ENCODE measurements at regions of chr10 and their contacts with region 1.

Region 1: GRCh38 chr10:10665750-10666149 is 351.9 kb upstream of the CELF2 start:
- DNase-seq: no peak
- CTCF ChIP-seq: no peak

Region 2: DNA sequence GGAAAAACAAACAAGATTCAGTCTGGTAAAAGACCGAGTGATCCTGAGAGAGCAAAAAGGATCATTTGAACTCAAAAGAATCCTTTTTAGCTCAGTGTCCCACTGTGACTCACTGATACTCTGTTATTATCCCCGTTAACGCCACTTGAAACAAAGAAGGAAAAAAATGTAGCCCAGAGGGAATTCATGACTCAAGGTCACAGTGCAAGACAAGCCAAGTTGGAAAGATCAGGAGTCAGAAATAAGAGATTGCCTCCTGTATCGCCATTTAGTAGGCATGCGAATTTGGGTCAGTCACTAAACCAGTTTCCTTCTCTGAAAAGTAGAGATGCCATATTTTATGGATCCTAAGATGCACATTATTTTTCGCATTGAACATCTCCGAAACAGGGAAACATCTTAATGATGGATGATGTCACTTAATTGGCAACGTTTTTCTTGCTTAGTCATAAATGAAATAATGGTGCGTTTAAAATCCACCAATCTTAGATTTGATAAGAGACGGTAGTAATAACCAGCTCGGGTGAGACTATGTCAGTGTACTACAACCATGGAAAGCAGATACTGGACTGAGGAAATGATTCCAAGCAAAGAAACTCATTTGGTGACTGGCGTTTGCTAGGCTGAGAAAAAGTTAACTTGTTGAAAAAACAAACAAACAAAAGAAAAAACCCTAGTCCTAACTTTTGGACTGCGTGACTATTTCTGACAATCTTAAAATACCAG is 150.1 kb before region 1 on chr10:
- CTCF ChIA-PET with region 1: no interaction called
- POLR2A ChIA-PET with region 1: no interaction called
- DNase-seq: no peak
- CTCF ChIP-seq: no peak

Region 3: DNA sequence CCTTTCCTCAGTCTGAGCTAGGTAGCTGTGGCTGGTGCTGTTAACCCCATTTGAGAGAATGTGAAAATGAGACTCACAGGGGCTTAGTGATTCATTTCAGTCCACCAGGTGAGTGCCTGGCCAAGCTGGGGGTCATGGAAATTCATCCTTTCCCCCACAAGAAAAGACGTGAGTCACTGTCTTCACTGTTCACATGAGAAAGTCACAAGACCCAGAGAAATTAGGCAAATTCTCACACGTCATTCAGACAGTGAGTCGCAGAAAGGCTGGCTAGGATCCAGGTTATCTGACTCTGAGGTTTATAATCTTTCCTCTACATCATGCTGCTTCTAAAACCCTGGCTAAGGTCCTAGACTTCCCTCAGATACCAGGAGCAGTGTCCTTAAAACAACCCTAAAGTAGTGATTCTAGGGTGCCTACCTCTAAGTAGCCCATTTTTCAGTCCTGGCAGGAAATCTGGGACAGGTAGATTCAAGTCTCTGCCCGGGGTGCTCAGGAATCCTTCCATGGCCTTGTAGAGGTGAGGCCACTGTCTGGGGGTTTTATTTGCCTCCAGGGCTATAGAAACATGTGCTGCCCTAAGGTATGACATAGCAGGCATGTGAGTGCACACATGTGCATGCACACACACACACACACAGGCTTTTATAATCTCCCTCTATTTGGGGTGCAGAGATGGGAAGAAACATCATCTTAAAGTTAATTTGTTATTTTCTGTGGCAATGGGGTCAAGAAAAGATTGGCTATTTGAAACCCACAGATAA is 76.0 kb before region 1 on chr10:
- CTCF ChIA-PET with region 1: no interaction called
- POLR2A ChIA-PET with region 1: no interaction called
- DNase-seq: peak; percentile 13
- CTCF ChIP-seq: no peak

Region 4: GRCh38 chr10:10677479-10677878 is 11.7 kb after region 1 on chr10:
- CTCF ChIA-PET with region 1: interaction called, 31 read pairs
- POLR2A ChIA-PET with region 1: no interaction called
- DNase-seq: no peak
- CTCF ChIP-seq: peak; percentile 26

Region 5: GRCh38 chr10:10716972-10717371 is 51.2 kb after region 1 on chr10:
- CTCF ChIA-PET with region 1: no interaction called
- POLR2A ChIA-PET with region 1: no interaction called
- DNase-seq: no peak
- CTCF ChIP-seq: no peak

Measured in GM10248 (cell line).